ENCODE measurements at regions of chr14 and their contacts with region 1.

Region 1: DNA sequence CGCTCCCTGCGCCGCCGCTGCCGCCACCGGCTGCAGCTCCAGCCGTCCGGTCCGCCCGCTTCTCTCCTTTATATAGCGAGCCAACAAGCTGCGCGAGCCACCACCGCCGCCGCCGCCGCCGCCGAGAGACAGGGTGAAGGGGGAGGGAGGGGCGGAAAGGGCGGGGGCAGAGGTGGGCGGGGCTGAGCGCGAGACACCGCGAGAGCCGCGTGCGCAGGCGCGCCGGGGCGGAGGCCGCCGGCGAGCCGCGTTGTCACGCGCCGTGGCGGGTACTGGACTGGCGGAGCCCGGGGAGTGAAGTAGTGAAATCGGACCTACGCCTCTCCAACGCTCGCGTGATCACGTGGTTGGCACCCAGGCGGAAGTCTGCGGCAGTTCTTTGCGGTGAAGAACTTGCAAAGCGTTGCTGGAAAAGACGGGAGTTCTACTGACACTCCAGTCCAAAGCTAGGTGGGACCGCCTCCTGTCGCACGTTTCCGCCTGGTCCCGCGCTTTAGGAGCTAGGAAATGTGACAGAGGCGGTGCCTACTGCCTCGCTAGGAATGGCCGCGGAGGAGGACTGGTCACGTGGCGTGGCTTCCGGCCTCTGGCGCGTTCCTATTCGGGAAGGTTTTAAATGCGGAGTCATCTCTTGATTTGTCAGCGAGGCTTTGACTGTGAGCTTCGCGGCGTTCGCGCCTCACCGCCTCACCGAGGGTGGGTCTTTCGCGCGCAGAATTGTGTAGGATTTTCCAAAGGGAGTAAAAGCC is at the start of gene GTF2A1:
- DNase-seq: peak; percentile 94
- ATAC-seq: peak; percentile 83
- H3K4me3 ChIP-seq: peak within 1 kb of the TSS; percentile 74 to 93 (median 90)
- H3K27ac ChIP-seq: peak within 1 kb of the TSS; percentile 92 to 98 (median 96)
- H3K4me1 ChIP-seq: peaks cover 27 to 30% of the 10 kb centered on the region in 2 donors
- H3K27me3 ChIP-seq: no peaks in the 10 kb centered on the region
- CTCF ChIP-seq: no peak
- POLR2A ChIP-seq: peak; percentile 84 to 86
- total RNA-seq, gene GTF2A1: 20.4 to 38.3 (median 33.2) TPM

Region 2: GRCh38 chr14:80554139-80554538 is 666.9 kb before region 1 on chr14:
- in situ Hi-C with region 1: no loop called
- intact Hi-C with region 1: no loop called
- DNase-seq: no peak
- ATAC-seq: no peak
- H3K4me3 ChIP-seq: no peak overlapping the region
- H3K27ac ChIP-seq: no peak overlapping the region
- H3K4me1 ChIP-seq: no peaks in the 10 kb centered on the region
- H3K27me3 ChIP-seq: no peaks in the 10 kb centered on the region
- CTCF ChIP-seq: no peak
- POLR2A ChIP-seq: no peak

Region 3: DNA sequence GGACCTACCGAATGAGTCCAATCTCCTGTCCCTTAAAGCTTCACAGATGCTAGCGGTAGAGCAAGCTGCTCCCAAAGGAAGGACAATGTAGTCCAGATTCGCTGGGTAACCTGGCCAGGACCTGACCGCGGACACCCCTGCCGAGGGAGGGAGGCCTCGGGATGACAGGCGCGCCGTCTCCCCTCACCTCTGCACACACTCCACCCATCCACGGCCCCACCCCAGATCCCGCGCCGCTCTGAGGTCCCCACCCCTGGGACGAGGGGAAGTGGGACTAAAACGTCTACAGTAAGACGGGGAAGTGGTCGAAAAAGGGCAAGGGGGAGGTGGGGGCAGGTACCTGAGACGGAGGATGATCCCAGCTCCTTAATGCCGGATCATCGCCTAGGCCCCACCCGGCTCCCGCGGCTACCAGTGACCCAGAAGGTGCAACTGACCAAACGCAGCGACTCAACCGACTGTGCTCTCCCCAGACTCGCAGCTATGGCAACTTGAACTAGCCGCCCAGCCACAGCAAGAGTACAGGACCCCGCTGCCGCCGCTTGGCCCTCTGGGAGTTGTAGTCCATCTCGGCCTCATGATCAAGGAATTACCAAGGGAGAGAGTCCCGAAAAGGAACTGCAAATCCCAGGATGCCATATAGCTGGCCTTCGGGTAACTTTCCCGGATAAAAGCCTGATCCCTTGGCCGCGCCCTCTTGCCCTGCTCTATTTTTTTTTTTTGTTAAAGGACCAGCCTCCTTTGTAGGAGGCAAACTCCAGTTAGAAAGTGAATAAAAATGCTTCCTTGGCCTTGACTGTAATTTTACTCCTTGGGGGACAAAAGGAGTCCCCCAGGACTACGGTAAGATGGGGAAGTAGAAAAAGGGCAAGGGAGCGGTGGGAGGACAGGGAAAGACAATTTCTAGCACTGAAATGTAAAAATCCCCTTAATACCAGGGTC is 279.5 kb before region 1 on chr14 and contains the start of gene CEP128:
- in situ Hi-C with region 1: no loop called
- intact Hi-C with region 1: loop called (anchors 5 kb)
- DNase-seq: peak; percentile 92 to 94
- ATAC-seq: peak; percentile 100
- H3K4me3 ChIP-seq: peak within 1 kb of the TSS; percentile 61 to 85 (median 80)
- H3K27ac ChIP-seq: peak within 1 kb of the TSS; percentile 70 to 79 (median 74)
- H3K4me1 ChIP-seq: peaks cover 5 to 8% of the 10 kb centered on the region in 2 donors
- H3K27me3 ChIP-seq: no peaks in the 10 kb centered on the region
- CTCF ChIP-seq: no peak
- POLR2A ChIP-seq: no peak
- total RNA-seq, gene CEP128: 0.82 to 3.6 (median 1.6) TPM

Region 4: GRCh38 chr14:81331229-81332021 is 110.4 kb after region 1 on chr14:
- in situ Hi-C with region 1: no loop called
- intact Hi-C with region 1: no loop called
- DNase-seq: no peak
- ATAC-seq: no peak
- H3K4me3 ChIP-seq: no peak overlapping the region
- H3K27ac ChIP-seq: no peak overlapping the region
- H3K4me1 ChIP-seq: peaks cover 0 to 8% of the 10 kb centered on the region in 2 donors
- H3K27me3 ChIP-seq: no peaks in the 10 kb centered on the region
- CTCF ChIP-seq: no peak
- POLR2A ChIP-seq: no peak

Region 5: DNA sequence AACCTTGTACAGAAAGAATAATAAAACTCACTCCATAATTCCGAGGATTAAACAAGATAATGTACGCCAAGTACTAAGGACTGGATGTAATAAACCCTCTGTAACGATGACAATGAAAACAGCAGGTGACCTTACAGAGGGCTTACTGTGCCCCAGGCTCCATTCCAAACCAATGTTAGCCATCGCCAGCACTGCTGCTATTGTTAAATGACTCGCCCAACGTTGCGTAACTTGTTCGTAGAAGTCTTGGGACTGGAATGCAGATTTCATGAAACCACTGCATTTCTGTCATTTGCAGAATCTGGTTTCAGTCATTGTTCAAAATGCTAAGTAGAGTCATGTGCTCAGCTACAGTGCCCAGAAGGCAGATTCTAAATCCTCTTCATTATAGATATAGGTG is 179.8 kb after region 1 on chr14:
- in situ Hi-C with region 1: no loop called
- intact Hi-C with region 1: loop called (anchors 2 kb)
- DNase-seq: peak; percentile 91 to 92
- ATAC-seq: peak; percentile 80 to 89
- H3K4me3 ChIP-seq: peak overlapping the region in 1 of 4 donors; percentile 16
- H3K27ac ChIP-seq: peak overlapping the region; percentile 85 to 95 (median 92)
- H3K4me1 ChIP-seq: peaks cover 45 to 48% of the 10 kb centered on the region in 2 donors
- H3K27me3 ChIP-seq: no peaks in the 10 kb centered on the region
- CTCF ChIP-seq: peak in 1 of 5 experiments; percentile 19
- POLR2A ChIP-seq: no peak

Region 6: DNA sequence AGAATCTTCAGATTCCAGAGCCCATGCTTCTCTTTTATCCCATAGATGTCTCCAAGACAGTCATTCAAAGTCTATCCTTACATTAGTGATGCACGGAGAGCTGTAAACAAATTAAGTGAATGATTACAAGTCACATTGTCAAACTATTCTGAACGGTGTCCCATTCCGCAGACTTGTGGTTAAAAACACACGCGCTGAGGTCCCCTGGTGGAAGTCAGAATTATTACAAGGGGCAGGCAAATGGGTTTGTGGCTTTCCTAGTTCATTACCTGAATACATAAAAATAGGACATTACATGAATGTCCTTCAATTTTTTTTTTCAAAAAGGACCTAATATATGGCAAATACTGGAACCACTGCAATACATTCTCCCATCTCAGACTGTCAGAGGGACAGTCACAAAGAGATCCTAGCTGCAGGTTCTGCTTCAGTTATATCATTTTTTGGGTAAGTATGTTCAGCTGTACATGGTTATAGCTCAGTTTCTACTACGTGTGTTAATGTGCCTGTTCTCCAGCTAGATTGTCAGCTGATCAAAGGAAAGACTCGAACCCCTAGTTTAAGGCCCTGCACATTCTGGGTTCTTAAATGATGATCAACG is 232.3 kb after region 1 on chr14:
- in situ Hi-C with region 1: no loop called
- intact Hi-C with region 1: loop called (anchors 5 kb)
- DNase-seq: peak; percentile 36 to 39
- ATAC-seq: peak; percentile 38 to 50
- H3K4me3 ChIP-seq: no peak overlapping the region
- H3K27ac ChIP-seq: peak overlapping the region; percentile 17 to 89 (median 84)
- H3K4me1 ChIP-seq: peaks cover 27 to 37% of the 10 kb centered on the region in 2 donors
- H3K27me3 ChIP-seq: no peaks in the 10 kb centered on the region
- CTCF ChIP-seq: peak; percentile 86 to 96 (median 90)
- POLR2A ChIP-seq: no peak

Region 7: DNA sequence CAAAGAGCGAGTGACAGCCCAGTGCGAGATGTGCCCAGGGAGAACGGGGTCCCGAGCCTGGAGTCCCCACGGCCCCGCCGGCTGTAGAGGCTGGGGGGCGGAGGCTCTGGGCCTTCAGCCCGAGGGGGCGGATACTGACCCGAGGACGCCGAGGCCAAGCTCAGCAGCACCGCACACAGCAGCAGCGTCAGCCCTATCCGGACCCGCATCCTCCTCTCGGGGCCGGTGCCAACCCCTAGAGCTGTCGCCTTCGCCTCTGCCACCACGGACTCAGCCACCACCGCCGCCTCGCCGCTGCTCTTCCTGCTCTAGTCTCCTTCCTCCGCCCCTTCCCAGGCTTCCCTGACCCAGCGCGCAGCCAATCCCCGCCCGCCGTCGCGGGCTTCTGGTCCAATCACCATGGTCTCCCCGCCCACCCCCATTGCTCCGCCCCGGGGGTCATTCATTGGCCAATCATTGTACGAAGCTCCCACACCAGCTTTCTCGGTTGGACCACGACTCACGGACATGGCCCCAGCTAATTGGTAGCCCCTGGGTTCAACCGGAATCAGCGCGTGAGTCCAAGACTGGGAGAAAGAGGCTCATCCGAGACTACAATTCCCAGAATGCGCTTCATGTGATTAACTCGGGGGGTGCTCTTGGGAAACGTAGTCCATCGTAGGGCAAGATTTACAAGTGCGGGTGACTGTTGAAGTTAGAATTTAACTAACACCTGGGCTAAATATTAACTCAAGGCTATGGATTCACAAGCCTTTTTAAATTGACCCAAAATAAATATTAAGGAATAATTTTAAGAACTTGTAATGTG is 312.7 kb after region 1 on chr14 and contains the start of gene SEL1L:
- in situ Hi-C with region 1: no loop called
- intact Hi-C with region 1: loop called (anchors 5 kb)
- DNase-seq: peak; percentile 100
- ATAC-seq: peak; percentile 99 to 100
- H3K4me3 ChIP-seq: peak within 1 kb of the TSS; percentile 93 to 98 (median 97)
- H3K27ac ChIP-seq: peak within 1 kb of the TSS; percentile 81 to 92 (median 86)
- H3K4me1 ChIP-seq: peaks cover 45 to 55% of the 10 kb centered on the region in 2 donors
- H3K27me3 ChIP-seq: no peaks in the 10 kb centered on the region
- CTCF ChIP-seq: no peak
- POLR2A ChIP-seq: peak; percentile 87 to 91
- total RNA-seq, gene SEL1L: 46.8 to 63.9 (median 51.0) TPM